Activated T-helper 1 cell treated with anti-CD3 and anti-CD28 coated beads, Interleukin-12 subunit alpha, Interleukin-12 subunit beta, Interleukin-2, Interleukin-4 antibody, amounts not matched to agents 30 ng/mL and 10 ng/mL and 1 ng/mL, durations not matched to agents 14 hours and 24 hours and 36 hours (primary cell): ENCODE measurements at regions of chr15 and their contacts with region 1.

Region 1: DNA sequence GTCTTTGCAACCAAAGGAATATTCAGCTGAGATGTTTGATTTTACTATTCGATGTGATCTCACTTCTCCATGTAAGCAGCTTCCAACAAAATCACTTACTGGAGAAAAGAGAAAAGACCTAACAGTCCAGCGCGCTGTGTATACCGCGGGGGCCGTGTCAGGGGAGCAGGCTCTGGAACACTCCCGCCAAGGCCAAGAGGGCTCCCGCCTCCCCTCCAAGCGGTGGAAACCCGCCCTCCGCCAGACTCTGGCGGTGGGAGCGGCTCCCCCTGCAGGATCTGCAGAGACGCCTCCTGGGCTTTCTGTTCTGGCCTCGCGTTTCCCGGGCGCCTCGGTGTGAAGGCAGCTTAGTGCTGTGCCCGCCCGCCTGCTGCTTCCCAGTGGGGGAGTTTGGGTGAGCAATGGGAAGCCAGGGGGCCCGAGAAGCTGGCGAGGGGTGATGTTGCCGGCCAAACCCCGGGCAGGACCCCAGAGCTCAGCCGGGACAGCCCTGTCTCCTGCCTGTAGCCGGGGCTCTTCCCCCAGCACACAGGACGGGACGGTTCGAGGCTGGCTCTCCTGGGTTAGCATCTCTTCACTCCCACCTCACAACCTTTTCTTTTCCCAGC is 36.3 kb downstream of the CHST14 start:
- DNase-seq: peak; percentile 55
- H3K4me3 Mint-ChIP-seq: peak overlapping the region; percentile 17
- H3K27ac Mint-ChIP-seq: no peak overlapping the region
- H3K4me1 Mint-ChIP-seq: peaks cover 29% of the 10 kb centered on the region
- H3K27me3 Mint-ChIP-seq: peaks cover 69% of the 10 kb centered on the region

Region 2: GRCh38 chr15:40344631-40345120 is 162.4 kb before region 1 on chr15:
- intact Hi-C with region 1: loop called (anchors 5 kb)
- DNase-seq: peak; percentile 64
- H3K4me3 Mint-ChIP-seq: no peak overlapping the region
- H3K27ac Mint-ChIP-seq: no peak overlapping the region
- H3K4me1 Mint-ChIP-seq: no peaks in the 10 kb centered on the region
- H3K27me3 Mint-ChIP-seq: peaks cover 6% of the 10 kb centered on the region

Region 3: DNA sequence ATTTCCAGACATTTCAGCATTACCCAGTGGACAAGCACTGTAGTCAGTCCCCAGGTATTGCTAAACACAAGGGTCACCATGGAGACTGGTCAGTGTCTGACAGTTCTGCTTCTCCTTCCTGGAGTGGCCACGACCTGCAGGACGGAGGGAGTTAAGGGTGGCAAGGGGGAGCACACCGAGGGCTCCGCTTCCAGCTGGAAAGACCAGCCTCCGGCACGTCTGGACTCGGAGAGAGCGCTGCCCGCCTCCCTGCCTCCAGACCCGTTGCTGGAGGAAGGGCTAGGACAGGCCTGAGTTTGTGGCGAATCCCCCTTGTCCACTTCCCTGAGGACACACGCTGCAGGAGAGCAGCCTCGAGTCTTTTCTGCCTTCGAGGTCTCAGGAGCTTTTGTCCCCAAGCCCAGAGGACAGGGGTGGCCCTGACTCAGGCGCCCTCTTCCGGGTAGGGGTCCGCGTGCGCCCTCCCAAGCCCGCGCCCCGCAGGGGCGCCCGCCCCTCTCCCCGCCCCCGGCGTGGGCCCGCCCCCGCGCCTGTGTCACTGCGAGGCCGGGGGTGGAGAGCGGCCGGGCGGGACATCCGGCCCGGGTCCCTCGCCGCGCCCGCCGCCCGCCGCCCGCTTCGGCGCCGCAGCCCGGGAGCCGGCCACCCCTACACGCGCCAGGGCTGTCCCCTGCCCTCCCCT is 36.5 kb before region 1 on chr15 and contains the start of gene CHST14:
- intact Hi-C with region 1: loop called (anchors 1 kb)
- DNase-seq: peak; percentile 56
- H3K4me3 Mint-ChIP-seq: peak within 1 kb of the TSS; percentile 89
- H3K27ac Mint-ChIP-seq: peak within 1 kb of the TSS; percentile 79
- H3K4me1 Mint-ChIP-seq: peaks cover 25% of the 10 kb centered on the region
- H3K27me3 Mint-ChIP-seq: peaks cover 3% of the 10 kb centered on the region
- total RNA-seq, gene CHST14: 9.7 and 10.2 TPM in 2 replicates